ENCODE measurements at regions of chr5 and their contacts with region 1.

Region 1: GRCh38 chr5:58886315-58887207 is 303.7 kb downstream of the RAB3C start:
- DNase-seq: peak in 41 of 42 donors; percentile 21 to 82 (median 68)

Region 2: DNA sequence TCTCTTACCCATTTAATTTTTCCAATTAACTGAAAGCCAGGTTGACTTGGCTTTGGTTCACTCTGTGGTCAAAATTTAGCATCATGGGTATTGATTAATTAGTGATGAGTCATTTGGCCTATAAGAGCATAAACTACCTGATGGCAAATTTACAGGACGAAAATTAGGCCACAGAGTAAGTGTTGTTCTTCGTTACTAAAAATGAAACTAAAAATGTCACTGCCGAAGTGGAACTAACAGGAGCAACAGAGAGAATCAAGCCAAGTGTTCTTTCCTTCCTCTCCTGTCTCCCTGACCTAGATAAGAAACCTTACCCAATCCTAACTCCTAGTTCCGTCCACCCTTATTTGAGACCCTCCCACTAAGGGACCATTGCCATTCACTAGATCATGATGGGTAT is 126.8 kb before region 1 on chr5:
- intact Hi-C with region 1: no loop called
- DNase-seq: no peak

Region 3: GRCh38 chr5:59007460-59008063 is 121.0 kb after region 1 on chr5:
- intact Hi-C with region 1: loop called (anchors 5 kb)
- DNase-seq: no peak

Region 4: DNA sequence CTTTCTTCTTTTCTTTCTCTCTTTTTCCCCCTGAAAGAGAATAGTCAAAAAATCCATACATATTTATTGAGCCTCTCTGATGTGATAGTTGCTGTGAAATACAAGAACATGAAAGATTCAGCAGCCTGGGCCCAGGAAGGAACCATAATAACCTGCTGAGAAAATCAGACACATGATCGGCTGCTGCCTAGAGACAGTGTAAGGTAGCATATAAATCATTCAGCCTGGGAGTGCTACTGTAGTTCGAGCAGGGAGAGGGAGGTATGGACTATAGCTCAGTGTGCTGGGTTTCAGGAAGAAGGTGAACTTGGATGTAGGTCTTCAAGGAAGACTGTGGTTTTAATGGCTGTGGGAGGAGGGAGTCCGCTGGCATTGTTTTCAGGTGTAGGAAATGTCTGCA is 165.4 kb after region 1 on chr5:
- intact Hi-C with region 1: no loop called
- DNase-seq: no peak

Region 5: DNA sequence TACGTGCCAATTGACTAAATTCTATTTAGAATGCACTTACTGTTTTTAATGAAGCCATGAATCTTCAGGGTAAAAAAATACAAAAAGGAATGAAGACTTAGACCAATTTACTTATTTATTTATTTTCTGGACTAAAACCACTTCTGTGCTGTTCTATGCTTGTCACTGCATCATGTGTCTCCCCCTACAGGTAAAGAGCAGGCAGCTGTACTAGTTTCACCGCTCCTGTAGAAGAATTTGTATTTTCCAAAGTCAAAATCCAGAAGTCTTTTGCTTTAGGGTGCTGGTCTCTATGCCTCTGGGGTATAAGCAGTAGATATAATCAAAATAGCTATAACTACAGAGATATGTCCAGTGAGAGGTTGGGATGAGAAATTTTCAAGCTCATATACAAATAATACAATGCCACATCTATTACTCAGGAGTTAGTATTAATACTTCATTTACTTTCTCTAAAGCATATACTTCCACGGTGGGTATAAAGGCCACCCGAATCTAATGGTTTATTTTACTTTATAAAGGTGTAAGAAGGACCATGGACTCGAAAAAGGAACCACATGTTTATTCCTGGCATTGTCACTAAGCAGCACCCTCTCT is 287.8 kb after region 1 on chr5:
- intact Hi-C with region 1: loop called (anchors 10 kb)
- DNase-seq: peak in 14 of 42 donors; percentile 10 to 53 (median 27)

Region 6: DNA sequence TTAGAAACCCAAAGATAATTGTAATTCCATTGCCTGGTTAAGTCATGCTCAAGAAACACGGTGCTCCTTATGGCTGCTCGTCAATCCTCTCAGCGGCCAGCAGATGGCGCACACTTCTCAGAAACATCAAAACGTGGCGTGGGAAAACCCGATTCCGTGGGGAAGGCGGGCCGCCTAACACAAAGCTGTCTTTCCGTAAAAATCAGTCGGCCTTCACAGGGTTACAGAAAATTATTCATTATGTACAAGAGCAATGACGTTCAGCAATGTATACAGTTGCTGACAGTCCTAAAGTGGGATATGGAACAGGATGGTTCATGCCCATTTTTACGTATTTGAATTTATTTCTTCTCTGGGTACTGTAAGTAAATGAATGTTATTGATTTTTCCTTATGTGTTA is 923.5 kb after region 1 on chr5:
- intact Hi-C with region 1: no loop called
- DNase-seq: peak; percentile 70 to 93 (median 85)